Left ventricle myocardium superior (tissue), 1 donor: ENCODE measurements at regions of chr1 and their contacts with region 1.

Region 1: GRCh38 chr1:209860293-209860881 is 32.6 kb downstream of the UTP25 start:
- DNase-seq: peak; percentile 78
- ATAC-seq: peak; percentile 82

Region 2: GRCh38 chr1:209989525-209989924 is 129.1 kb after region 1 on chr1:
- intact Hi-C with region 1: loop called (anchors 5 kb)
- DNase-seq: no peak
- ATAC-seq: no peak